Activated CD4-positive, alpha-beta T cell treated with anti-CD3 and anti-CD28 coated beads, Interleukin-2, amount 10 ng/mL, durations not matched to agents 24 days and 14 days (primary cell): ENCODE measurements at regions of chr10 and their contacts with region 1.

Region 1: DNA sequence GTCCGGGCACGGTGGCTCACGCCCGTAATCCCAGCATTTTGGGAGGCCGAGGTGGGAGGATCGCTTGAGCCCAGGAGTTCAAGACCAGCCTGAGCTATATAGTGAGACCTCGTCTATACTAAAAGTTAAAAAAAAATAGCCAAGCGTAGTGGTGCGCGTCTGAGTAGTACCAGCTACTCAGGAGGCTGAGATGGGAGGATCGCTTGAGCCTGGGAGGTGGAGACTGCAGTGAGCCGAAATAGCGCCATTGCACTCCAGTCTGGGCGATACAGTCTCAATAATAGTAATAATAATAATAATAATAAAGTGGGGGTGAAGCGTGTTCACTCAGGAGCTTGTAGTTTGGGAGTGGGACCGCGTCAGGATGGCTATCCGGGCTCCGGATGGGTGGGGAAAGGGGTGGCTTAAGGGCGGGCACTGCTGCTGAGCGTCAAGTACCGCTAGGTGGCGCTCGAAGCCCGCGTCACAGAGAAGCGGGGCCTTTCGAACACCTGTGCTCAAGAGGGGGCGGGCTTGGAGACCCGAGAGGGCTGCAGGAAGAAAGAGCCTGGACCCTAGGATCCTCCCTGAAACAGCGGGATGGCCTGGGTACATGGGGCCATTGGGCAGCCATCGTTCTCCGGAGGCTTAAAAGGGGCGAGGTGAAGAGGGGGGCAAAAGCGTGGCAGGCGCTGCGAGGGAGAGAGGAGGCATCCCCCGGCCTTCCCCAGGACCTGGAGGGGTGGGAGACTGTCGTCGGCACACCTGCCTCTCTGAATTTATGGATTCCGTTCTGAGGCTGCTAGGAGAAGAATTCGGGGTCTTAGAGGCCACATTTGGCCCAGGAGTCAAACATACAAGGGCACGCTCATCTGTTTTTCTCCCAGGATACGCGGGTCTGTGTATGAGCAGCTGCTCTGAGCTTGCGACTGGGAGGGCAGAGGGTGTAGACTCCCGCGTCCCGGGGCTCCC is 14.5 kb downstream of the LBX1 start:
- DNase-seq: peak; percentile 90
- H3K4me3 Mint-ChIP-seq: peak overlapping the region; percentile 59
- H3K27ac Mint-ChIP-seq: peak overlapping the region; percentile 69
- H3K4me1 Mint-ChIP-seq: peaks cover 18% of the 10 kb centered on the region
- H3K27me3 Mint-ChIP-seq: peaks cover 79% of the 10 kb centered on the region

Region 2: GRCh38 chr10:101042667-101043355 is 171.9 kb before region 1 on chr10:
- intact Hi-C with region 1: loop called (anchors 10 kb)
- DNase-seq: peak; percentile 96
- H3K4me3 Mint-ChIP-seq: peak overlapping the region; percentile 97
- H3K27ac Mint-ChIP-seq: peak overlapping the region; percentile 89
- H3K4me1 Mint-ChIP-seq: peaks cover 19% of the 10 kb centered on the region
- H3K27me3 Mint-ChIP-seq: peaks cover 32% of the 10 kb centered on the region

Region 3: DNA sequence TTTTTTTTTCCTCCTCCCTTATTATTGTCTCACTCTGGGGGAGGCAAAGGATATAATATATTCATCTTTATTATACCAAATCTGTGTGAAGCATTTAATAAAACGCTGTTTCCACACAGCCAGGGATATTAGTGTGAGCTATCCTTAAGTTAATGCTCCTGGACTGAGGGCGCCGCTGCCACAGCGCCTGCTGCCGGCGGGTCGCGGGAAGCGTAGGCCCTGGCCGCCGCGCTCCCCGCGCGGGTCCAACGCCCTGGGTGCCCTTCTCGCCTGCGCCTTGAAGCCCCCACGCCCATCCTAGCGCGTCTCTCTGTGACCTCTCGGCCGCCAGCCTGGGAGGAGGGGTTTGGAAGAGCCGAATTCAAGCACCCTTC is 24.0 kb after region 1 on chr10:
- intact Hi-C with region 1: loop called (anchors 1 kb)
- DNase-seq: peak; percentile 73
- H3K4me3 Mint-ChIP-seq: no peak overlapping the region
- H3K27ac Mint-ChIP-seq: no peak overlapping the region
- H3K4me1 Mint-ChIP-seq: peaks cover 6% of the 10 kb centered on the region
- H3K27me3 Mint-ChIP-seq: peaks cover 67% of the 10 kb centered on the region

Region 4: GRCh38 chr10:101441541-101442455 is 227.1 kb after region 1 on chr10:
- intact Hi-C with region 1: loop called (anchors 2 kb)
- DNase-seq: peak; percentile 71
- H3K4me3 Mint-ChIP-seq: no peak overlapping the region
- H3K27ac Mint-ChIP-seq: no peak overlapping the region
- H3K4me1 Mint-ChIP-seq: no peaks in the 10 kb centered on the region
- H3K27me3 Mint-ChIP-seq: peaks cover 2% of the 10 kb centered on the region